Kidney (tissue), 22 donors: ENCODE measurements at regions of chr7 and their contacts with region 1.

Region 1: DNA sequence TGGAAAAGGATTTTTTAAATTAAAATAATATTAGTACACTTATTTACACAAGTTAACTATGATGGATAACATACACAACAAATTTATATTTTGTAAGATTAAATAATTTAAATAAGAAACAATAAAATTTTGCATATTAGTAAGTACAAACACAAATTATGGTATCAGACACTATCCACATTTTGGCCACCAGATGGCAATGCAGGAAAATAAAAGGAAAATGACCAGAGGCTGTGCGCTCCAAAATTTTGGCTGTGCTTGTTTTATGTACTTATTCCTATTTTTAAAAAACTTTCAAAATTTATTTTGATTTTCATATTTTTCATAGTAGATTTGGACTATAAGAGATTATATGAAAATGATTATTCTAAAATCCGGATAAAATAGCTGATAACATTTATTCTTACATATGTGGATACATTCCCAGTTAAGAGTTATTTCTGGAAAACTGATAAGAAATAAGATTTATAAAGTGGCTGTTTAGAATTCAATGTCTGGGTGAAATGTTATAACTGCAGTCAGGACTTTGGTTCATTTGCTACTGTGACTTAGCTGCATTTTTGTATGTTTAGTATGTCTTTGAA is 274.7 kb upstream of the HGF start:
- DNase-seq: peak in 3 of 5 donors; percentile 26 to 78 (median 62)
- H3K4me3 ChIP-seq: no peak overlapping the region
- H3K27ac ChIP-seq: no peak overlapping the region
- H3K4me1 ChIP-seq: no peaks in the 10 kb centered on the region
- H3K27me3 ChIP-seq: no peaks in the 10 kb centered on the region
- CTCF ChIP-seq: peak; percentile 73

Region 2: DNA sequence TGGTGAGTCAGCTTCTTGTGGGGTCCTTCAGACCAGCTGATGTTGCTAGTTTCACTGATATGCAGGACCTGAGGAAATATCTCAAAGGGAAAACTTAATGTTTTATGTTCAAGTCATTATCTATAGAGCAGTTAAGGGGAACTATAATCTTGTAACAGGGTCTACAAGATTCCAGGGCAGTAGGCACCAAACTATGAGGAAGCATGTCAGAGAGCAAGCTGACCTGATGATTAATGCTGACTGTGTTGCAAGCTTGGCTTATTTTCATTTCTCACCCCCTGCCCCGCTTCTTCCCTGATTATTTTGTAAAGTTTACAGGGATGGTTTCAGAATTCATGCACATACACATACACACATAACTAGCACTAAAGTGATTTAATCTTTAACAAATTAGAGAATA is 483.2 kb after region 1 on chr7:
- intact Hi-C with region 1: no loop called
- DNase-seq: no peak
- H3K4me3 ChIP-seq: no peak overlapping the region
- H3K27ac ChIP-seq: no peak overlapping the region
- H3K4me1 ChIP-seq: no peaks in the 10 kb centered on the region
- H3K27me3 ChIP-seq: no peaks in the 10 kb centered on the region
- CTCF ChIP-seq: no peak

Region 3: GRCh38 chr7:82572195-82572880 is 527.7 kb after region 1 on chr7:
- intact Hi-C with region 1: loop called (anchors 10 kb)
- DNase-seq: peak; percentile 84 to 95 (median 89)
- H3K4me3 ChIP-seq: peak overlapping the region in 1 of 3 donors; percentile 15
- H3K27ac ChIP-seq: no peak overlapping the region
- H3K4me1 ChIP-seq: no peaks in the 10 kb centered on the region
- H3K27me3 ChIP-seq: no peaks in the 10 kb centered on the region
- CTCF ChIP-seq: peak; percentile 91